WTC11 (cell line): ENCODE measurements at regions of chr11 and their contacts with region 1.

Region 1: DNA sequence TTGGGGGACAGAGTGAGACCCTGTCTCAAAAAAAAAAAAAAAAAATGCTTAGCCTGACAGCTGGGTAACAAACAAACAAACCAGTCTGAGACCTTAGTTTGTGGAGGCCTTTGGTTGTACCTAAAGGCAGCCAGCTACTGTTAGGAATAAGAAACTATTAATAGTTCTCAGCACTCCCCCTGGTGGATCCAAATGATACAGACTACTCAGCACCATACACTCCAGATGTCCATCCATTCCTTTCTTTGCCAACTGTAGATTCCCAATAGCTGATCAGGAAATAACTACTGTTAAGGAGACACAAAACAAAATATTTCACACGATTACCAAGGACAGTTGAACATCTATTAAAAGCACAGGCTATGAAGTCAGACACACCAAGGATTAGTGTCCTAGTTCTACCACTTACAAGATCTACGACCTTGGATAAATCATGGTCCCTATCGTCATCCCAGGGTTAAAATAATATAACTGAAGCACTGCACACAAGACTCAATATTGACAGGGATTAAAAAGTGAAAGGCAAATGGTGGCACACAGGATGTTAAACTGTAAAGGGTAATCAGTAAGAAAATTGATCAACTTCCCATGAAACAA is 17.2 kb downstream of the CLDN25 start:
- DNase-seq: no peak
- ATAC-seq: peak; percentile 94
- H3K4me3 Mint-ChIP-seq: no peak overlapping the region
- H3K27ac Mint-ChIP-seq: no peak overlapping the region
- H3K4me1 Mint-ChIP-seq: no peaks in the 10 kb centered on the region
- H3K27me3 Mint-ChIP-seq: no peaks in the 10 kb centered on the region
- CTCF ChIP-seq: peak; percentile 36; the same call in 1 of the 2 replicates

Region 2: DNA sequence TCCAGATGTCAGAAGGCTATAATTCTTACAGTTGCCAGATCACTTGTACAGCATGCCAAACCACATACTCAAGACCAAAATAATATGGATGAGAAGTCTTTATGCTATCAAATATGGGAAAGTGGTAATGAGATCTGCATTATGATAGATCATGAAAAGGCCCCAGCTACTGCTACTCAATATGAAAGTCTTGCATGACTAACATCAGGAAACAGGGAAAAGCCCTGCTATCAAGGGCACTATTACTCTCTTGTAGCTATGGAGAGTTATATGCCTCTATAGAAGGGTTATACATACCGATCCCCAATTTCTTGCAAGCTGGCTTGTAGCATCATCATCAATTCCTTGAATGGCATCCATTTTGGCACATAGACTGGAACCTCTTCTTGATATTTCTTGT is 60.4 kb before region 1 on chr11:
- CTCF ChIA-PET with region 1: no interaction called
- POLR2A ChIA-PET with region 1: no interaction called
- DNase-seq: no peak
- ATAC-seq: no peak
- H3K4me3 Mint-ChIP-seq: no peak overlapping the region
- H3K27ac Mint-ChIP-seq: no peak overlapping the region
- H3K4me1 Mint-ChIP-seq: no peaks in the 10 kb centered on the region
- H3K27me3 Mint-ChIP-seq: no peaks in the 10 kb centered on the region
- CTCF ChIP-seq: no peak

Region 3: GRCh38 chr11:113773416-113774173 is 23.2 kb before region 1 on chr11 and contains the start of gene ZW10:
- CTCF ChIA-PET with region 1: interaction called, 11 read pairs
- POLR2A ChIA-PET with region 1: no interaction called
- DNase-seq: peak; percentile 95
- ATAC-seq: peak; percentile 99
- H3K4me3 Mint-ChIP-seq: peak within 1 kb of the TSS; percentile 100
- H3K27ac Mint-ChIP-seq: peak within 1 kb of the TSS; percentile 93
- H3K4me1 Mint-ChIP-seq: peaks cover 10% of the 10 kb centered on the region
- H3K27me3 Mint-ChIP-seq: peaks cover 15% of the 10 kb centered on the region
- CTCF ChIP-seq: peak; percentile 53
- total RNA-seq, gene ZW10: 17.4 to 18.9 TPM (median 18.0 TPM) in 3 replicates

Region 4: DNA sequence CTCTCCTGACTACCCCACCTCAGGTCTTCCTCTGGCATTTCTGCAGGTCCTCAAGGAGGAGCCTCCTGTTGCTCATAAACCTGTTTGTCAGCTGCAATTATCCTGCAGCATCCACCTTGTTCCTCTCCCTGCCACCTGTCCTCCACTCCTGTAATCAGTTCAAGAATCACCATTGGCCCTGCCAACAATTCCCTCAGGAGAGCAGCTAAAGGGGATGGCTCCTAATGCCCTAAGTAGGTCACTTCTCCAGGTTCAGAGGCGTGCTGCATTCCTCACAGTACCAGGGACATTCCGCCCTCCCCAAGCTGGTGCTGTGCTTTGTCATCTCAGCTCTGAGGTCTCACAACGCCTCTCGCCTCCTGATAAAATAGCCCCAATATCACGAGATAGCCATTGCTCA is 15.1 kb before region 1 on chr11:
- CTCF ChIA-PET with region 1: interaction called, 13 read pairs
- POLR2A ChIA-PET with region 1: no interaction called
- DNase-seq: no peak
- ATAC-seq: peak; percentile 76
- H3K4me3 Mint-ChIP-seq: no peak overlapping the region
- H3K27ac Mint-ChIP-seq: no peak overlapping the region
- H3K4me1 Mint-ChIP-seq: no peaks in the 10 kb centered on the region
- H3K27me3 Mint-ChIP-seq: peaks cover 5% of the 10 kb centered on the region
- CTCF ChIP-seq: no peak

Region 5: DNA sequence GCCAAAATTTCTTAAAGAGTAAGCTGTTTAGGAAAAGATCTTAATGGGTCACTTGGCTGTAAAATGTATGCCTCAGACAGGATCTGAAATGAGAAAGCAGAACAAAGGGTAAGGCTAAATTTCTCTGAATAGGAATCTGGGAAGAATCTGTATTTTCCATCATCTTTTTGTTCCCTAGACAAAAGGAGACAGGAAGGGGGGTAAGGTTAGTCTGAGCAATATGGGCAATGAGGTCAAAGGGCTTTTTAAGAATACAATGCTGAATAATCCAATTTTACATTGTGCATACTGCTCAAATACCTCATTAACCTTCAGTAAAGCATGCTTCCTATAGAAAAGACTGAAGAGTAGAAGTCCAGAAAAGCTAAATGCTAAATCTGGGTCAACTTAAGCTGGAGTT is 17.4 kb after region 1 on chr11:
- CTCF ChIA-PET with region 1: interaction called, 12 read pairs
- POLR2A ChIA-PET with region 1: no interaction called
- DNase-seq: no peak
- ATAC-seq: no peak
- H3K4me3 Mint-ChIP-seq: no peak overlapping the region
- H3K27ac Mint-ChIP-seq: peak overlapping the region; percentile 53
- H3K4me1 Mint-ChIP-seq: peaks cover 11% of the 10 kb centered on the region
- H3K27me3 Mint-ChIP-seq: no peaks in the 10 kb centered on the region
- CTCF ChIP-seq: no peak